Naive thymus-derived CD4-positive, alpha-beta T cell (primary cell): ENCODE measurements at regions of chr20 and their contacts with region 1.

Region 1: DNA sequence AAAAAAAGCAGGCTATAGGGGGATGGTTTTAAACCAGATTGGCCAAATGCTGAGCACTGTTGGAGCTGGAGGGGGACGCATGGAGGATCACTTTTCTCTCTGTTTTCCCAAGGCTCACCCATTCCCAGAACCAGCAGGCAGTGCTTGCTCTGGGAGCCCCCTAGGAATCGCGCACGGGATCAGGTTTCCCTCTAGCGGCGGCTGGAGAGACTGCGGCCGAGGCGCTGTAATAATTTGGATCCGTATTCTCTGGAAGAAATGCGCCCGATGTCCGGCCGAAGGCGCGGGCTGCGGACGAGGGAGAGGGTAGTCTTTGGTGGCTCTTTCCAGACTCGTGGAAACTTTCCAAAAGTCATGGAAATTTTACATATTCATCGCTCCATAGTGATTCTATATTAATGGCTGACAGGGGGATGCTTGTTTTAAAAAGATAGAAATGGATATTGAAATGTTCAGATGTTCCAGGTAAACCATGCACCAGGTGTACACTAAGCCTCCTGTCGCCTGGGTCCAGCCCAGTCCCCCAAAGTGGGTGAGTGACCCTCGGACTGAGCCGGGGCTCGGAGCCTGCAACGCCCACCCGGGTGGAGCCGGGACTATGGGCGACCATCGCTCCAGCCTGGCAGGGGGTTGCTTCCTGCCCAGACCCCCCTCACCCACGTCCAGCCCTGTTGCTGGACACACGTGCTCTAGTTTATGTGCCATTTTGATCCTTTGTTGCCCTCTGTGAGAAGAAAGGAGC is 78.7 kb upstream of the PHACTR3 start:
- DNase-seq: peak in 1 of 9 donors; percentile 2
- ATAC-seq: peak; percentile 27
- H3K4me3 ChIP-seq: no peak overlapping the region
- H3K4me3 Mint-ChIP-seq: peak overlapping the region in 1 of 10 donors; percentile 21
- H3K27ac ChIP-seq: no peak overlapping the region
- H3K27ac Mint-ChIP-seq: no peak overlapping the region
- H3K4me1 ChIP-seq: no peaks in the 10 kb centered on the region
- H3K4me1 Mint-ChIP-seq: peaks cover 0 to 9% (median 0%) of the 10 kb centered on the region in 7 donors
- H3K27me3 ChIP-seq: peaks cover 0 to 9% of the 10 kb centered on the region in 2 donors
- H3K27me3 Mint-ChIP-seq: peaks cover 57 to 76% (median 64%) of the 10 kb centered on the region in 5 donors

Region 2: DNA sequence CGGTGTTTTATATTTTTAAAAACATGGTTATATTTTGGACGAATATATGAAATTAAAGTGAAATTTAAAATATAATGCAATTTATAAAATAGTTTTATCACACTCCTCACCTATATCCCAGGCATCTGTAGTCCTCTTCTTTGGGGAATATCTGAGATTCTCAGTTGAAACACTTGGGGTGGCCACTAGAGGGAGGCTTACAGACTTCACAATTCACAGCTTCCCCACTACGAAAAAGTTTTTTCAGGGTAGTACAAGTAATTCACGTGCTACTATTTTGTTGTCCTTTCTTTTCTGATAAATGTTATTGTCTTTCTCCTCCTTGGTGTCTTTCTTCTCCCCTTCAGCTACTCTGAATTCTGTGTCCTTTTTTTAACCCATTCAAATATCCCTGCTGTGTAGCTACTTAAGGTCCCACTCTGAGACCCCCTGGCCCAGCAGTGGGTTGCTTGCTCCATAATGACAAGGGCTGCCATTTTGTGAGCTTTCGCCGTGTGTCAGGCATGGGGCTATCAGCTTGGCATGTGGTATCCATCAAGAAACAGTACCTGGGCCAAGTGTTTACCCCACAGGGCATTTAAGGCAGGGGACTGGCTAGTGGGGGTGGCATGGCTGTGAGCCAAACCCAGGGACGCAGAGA is 35.0 kb after region 1 on chr20:
- CTCF ChIA-PET with region 1: no interaction called
- POLR2A ChIA-PET with region 1: no interaction called
- intact Hi-C with region 1: loop called in 1 of 2 experiments (anchors 5 kb)
- DNase-seq: no peak
- ATAC-seq: no peak
- H3K4me3 ChIP-seq: no peak overlapping the region
- H3K4me3 Mint-ChIP-seq: no peak overlapping the region
- H3K27ac ChIP-seq: no peak overlapping the region
- H3K27ac Mint-ChIP-seq: no peak overlapping the region
- H3K4me1 ChIP-seq: no peaks in the 10 kb centered on the region
- H3K4me1 Mint-ChIP-seq: no peaks in the 10 kb centered on the region
- H3K27me3 ChIP-seq: no peaks in the 10 kb centered on the region
- H3K27me3 Mint-ChIP-seq: peaks cover 0 to 19% (median 5%) of the 10 kb centered on the region in 5 donors